Naive thymus-derived CD4-positive, alpha-beta T cell (primary cell): ENCODE measurements at regions of chr5 and their contacts with region 1.

Region 1: GRCh38 chr5:180291943-180292831 is at the start of gene MAPK9:
- DNase-seq: peak; percentile 82 to 92 (median 86)
- ATAC-seq: peak; percentile 85
- H3K4me3 ChIP-seq: peak within 1 kb of the TSS; percentile 79
- H3K4me3 Mint-ChIP-seq: peak within 1 kb of the TSS; percentile 90 to 100 (median 98)
- H3K27ac ChIP-seq: peak within 1 kb of the TSS; percentile 96
- H3K27ac Mint-ChIP-seq: peak within 1 kb of the TSS; percentile 96 to 100 (median 99)
- H3K4me1 ChIP-seq: peaks cover 15 to 17% of the 10 kb centered on the region in 2 donors
- H3K4me1 Mint-ChIP-seq: peaks cover 31 to 75% (median 58%) of the 10 kb centered on the region in 7 donors
- H3K27me3 ChIP-seq: no peaks in the 10 kb centered on the region
- H3K27me3 Mint-ChIP-seq: no peaks in the 10 kb centered on the region
- total RNA-seq, gene MAPK9: 25.7 to 41.4 (median 31.2) TPM

Region 2: GRCh38 chr5:179821581-179822432 is 470.4 kb before region 1 on chr5:
- CTCF ChIA-PET with region 1: no interaction called
- POLR2A ChIA-PET with region 1: no interaction called
- intact Hi-C with region 1: loop called in 1 of 2 experiments (anchors 5 kb)
- DNase-seq: peak; percentile 72 to 88 (median 85)
- ATAC-seq: peak; percentile 73
- H3K4me3 ChIP-seq: peak overlapping the region; percentile 87
- H3K4me3 Mint-ChIP-seq: peak overlapping the region; percentile 88 to 98 (median 95)
- H3K27ac ChIP-seq: peak overlapping the region; percentile 96
- H3K27ac Mint-ChIP-seq: peak overlapping the region; percentile 79 to 97 (median 94)
- H3K4me1 ChIP-seq: peaks cover 31 to 36% of the 10 kb centered on the region in 2 donors
- H3K4me1 Mint-ChIP-seq: peaks cover 30 to 62% (median 45%) of the 10 kb centered on the region in 7 donors
- H3K27me3 ChIP-seq: no peaks in the 10 kb centered on the region
- H3K27me3 Mint-ChIP-seq: no peaks in the 10 kb centered on the region

Region 3: GRCh38 chr5:180080486-180081280 is 211.5 kb before region 1 on chr5:
- CTCF ChIA-PET with region 1: no interaction called
- POLR2A ChIA-PET with region 1: no interaction called
- intact Hi-C with region 1: no loop called
- DNase-seq: peak in 6 of 9 donors; percentile 40 to 59 (median 46)
- ATAC-seq: no peak
- H3K4me3 ChIP-seq: peak overlapping the region; percentile 19
- H3K4me3 Mint-ChIP-seq: peak overlapping the region; percentile 47 to 88 (median 77)
- H3K27ac ChIP-seq: no peak overlapping the region
- H3K27ac Mint-ChIP-seq: peak overlapping the region in 6 of 9 donors; percentile 39 to 81 (median 58)
- H3K4me1 ChIP-seq: peaks cover 0 to 6% of the 10 kb centered on the region in 2 donors
- H3K4me1 Mint-ChIP-seq: peaks cover 3 to 17% (median 10%) of the 10 kb centered on the region in 7 donors
- H3K27me3 ChIP-seq: peaks cover 3% of the 10 kb centered on the region in 2 donors
- H3K27me3 Mint-ChIP-seq: peaks cover 23 to 48% (median 43%) of the 10 kb centered on the region in 5 donors

Region 4: GRCh38 chr5:180271221-180271620 is 21.0 kb before region 1 on chr5:
- CTCF ChIA-PET with region 1: no interaction called
- POLR2A ChIA-PET with region 1: no interaction called
- intact Hi-C with region 1: no loop called
- DNase-seq: no peak
- ATAC-seq: no peak
- H3K4me3 ChIP-seq: no peak overlapping the region
- H3K4me3 Mint-ChIP-seq: no peak overlapping the region
- H3K27ac ChIP-seq: no peak overlapping the region
- H3K27ac Mint-ChIP-seq: no peak overlapping the region
- H3K4me1 ChIP-seq: no peaks in the 10 kb centered on the region
- H3K4me1 Mint-ChIP-seq: peaks cover 0 to 1% (median 0%) of the 10 kb centered on the region in 7 donors
- H3K27me3 ChIP-seq: no peaks in the 10 kb centered on the region
- H3K27me3 Mint-ChIP-seq: no peaks in the 10 kb centered on the region

Region 5: DNA sequence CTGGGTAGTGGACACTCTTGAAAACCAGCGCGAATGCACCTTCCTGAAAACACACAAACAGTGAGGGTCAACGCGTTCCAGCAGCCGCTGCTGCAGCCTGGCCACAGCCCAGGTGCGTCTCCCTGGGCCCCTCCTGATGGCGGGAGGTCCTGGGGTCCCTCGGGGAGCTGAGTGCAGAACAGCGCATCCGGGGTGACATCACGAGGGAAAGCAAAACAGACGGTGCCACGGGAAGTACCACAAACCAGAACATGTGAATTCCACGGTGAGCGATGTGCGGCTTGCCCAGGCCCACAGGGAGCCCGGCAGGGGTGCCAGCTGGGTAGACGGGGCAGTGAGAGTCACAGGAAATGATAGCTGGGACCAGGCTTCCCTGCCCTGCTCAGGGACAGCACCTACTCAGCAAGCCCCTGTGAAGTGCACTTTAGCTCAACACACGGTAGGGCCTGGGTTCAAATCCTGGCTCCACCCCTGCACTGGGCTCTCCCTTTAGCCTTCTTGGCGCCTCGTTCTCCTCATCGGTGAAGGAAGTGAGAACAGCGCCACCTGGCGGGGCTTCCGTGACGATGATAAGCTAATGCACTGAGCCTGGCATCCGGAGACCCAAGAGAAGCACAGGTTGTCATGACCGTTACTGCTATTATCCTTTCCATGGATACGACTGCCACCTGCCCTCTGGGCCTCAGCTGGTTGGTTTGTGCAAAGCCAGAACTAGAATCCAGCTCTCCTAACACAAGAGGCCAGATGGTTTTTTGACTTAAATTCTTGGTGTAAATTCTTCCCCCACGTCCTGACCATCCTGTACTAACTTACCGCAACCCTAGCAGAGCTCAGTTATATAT is 36.3 kb after region 1 on chr5:
- CTCF ChIA-PET with region 1: interaction called, 30 read pairs
- POLR2A ChIA-PET with region 1: interaction called, 3 read pairs
- intact Hi-C with region 1: loop called (anchors 1 kb)
- DNase-seq: peak; percentile 60 to 79 (median 75)
- ATAC-seq: peak; percentile 91
- H3K4me3 ChIP-seq: no peak overlapping the region
- H3K4me3 Mint-ChIP-seq: no peak overlapping the region
- H3K27ac ChIP-seq: no peak overlapping the region
- H3K27ac Mint-ChIP-seq: no peak overlapping the region
- H3K4me1 ChIP-seq: no peaks in the 10 kb centered on the region
- H3K4me1 Mint-ChIP-seq: peaks cover 0 to 3% (median 0%) of the 10 kb centered on the region in 7 donors
- H3K27me3 ChIP-seq: no peaks in the 10 kb centered on the region
- H3K27me3 Mint-ChIP-seq: peaks cover 4 to 19% (median 9%) of the 10 kb centered on the region in 5 donors

Region 6: DNA sequence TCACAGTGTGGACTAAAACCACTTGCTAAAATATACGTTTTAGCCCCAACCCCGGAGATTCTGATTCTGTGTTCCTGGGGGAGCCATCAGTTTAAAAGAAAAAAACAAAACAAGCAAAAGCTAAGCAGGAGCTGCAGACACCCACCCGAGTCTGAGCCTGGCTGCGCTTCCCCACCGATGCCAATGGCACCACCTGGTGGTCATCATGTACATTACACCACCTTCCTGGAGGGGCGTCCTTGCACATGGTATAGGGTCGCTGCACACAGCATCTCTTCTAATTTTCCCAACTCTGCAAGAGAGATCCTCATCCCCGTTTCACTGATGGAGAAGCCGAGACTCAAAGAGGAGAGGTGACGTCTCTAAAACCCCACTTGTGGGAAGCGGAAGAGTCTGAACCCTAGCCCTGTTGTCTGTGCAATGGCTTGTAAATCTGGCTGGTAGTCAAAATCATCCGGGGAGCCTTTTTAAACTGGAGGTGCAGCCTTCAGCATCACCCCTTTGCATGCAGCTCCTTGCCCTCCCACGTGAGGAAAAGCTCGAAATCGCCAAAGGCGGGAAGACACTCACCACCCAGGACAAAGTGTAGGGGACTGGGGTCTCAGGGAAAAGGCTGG is 178.9 kb after region 1 on chr5:
- CTCF ChIA-PET with region 1: no interaction called
- POLR2A ChIA-PET with region 1: no interaction called
- intact Hi-C with region 1: loop called in 1 of 2 experiments (anchors 1 kb)
- DNase-seq: peak; percentile 14 to 61 (median 50)
- ATAC-seq: peak; percentile 88
- H3K4me3 ChIP-seq: no peak overlapping the region
- H3K4me3 Mint-ChIP-seq: no peak overlapping the region
- H3K27ac ChIP-seq: no peak overlapping the region
- H3K27ac Mint-ChIP-seq: no peak overlapping the region
- H3K4me1 ChIP-seq: no peaks in the 10 kb centered on the region
- H3K4me1 Mint-ChIP-seq: peaks cover 0 to 2% (median 0%) of the 10 kb centered on the region in 7 donors
- H3K27me3 ChIP-seq: no peaks in the 10 kb centered on the region
- H3K27me3 Mint-ChIP-seq: peaks cover 0 to 13% (median 6%) of the 10 kb centered on the region in 5 donors

Region 7: DNA sequence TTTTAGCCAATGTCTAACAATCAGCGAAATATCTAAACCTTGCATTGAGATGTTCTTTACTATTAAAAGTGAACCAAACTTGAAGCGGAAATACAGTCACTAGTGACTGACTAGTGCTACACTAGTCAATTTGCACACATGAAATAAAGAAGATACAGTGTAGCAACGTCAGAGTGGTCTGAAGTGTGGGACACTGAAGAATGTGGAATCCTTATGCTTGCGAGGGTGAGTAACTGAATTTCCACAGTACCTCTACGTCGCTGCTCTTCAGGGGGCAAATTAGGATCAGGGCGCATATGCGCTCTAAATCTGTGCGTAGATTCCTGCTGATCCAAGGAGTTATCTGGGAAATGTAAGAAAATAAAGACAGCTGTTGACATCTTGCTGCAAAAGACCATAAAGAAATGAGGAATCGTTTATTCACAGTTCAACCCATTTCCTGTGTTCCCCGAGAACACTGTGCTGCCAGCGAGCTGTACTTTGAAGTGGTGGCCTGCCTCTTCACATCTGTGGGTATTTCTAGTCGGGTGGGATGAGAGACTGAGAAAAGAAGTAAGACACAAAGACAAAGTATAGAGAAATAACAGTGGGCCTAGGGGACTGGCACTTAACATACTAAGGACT is 397.0 kb after region 1 on chr5:
- CTCF ChIA-PET with region 1: no interaction called
- POLR2A ChIA-PET with region 1: no interaction called
- intact Hi-C with region 1: loop called in 1 of 2 experiments (anchors 5 kb)
- DNase-seq: peak in 8 of 9 donors; percentile 27 to 80 (median 74)
- ATAC-seq: peak; percentile 88
- H3K4me3 ChIP-seq: peak overlapping the region; percentile 35
- H3K4me3 Mint-ChIP-seq: peak overlapping the region; percentile 52 to 87 (median 79)
- H3K27ac ChIP-seq: peak overlapping the region; percentile 75
- H3K27ac Mint-ChIP-seq: peak overlapping the region; percentile 51 to 98 (median 97)
- H3K4me1 ChIP-seq: peaks cover 29 to 75% of the 10 kb centered on the region in 2 donors
- H3K4me1 Mint-ChIP-seq: peaks cover 22 to 85% (median 80%) of the 10 kb centered on the region in 7 donors
- H3K27me3 ChIP-seq: no peaks in the 10 kb centered on the region
- H3K27me3 Mint-ChIP-seq: peaks cover 0 to 10% (median 0%) of the 10 kb centered on the region in 5 donors